H1 (cell line): ENCODE measurements at regions of chr14 and their contacts with region 1.

Region 1: DNA sequence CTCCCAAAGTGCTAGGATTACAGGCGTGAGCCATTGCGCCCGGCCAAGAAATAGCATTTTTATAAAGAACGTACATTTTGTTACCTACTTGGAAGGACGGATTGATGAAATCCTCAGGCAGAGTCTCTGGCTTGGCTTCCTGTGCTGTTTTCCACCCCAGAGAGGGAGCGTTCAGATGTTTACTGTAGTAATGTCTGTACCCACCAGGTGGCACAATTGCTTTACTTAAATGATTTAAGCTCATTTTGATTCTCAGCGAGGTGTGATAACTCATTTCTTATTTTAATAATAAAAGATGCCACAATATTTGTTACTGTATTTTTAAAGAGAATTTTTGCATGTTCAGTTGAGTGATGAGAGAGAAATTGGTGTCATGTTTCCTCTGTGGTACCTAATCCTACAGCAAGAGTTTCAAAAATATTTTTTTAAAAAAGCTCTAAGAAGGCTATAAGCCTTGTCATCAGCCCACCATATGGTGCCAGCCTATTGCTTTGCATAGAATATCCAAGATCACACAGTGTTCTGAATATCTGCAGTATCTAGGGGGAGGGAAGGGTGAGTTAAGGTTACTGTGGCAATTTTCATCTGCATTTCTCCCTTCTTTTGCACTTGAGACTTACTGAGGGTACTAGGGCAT is 82.6 kb upstream of the TRAF3 start:
- DNase-seq: peak; percentile 36 to 65
- H3K4me3 ChIP-seq: no peak overlapping the region
- H3K27ac ChIP-seq: no peak overlapping the region
- H3K4me1 ChIP-seq: peaks cover 0 to 8% (median under 1%) of the 10 kb centered on the region in 4 experiments; a peak in 2 of 7 replicates
- H3K27me3 ChIP-seq: no peaks in the 10 kb centered on the region
- CTCF ChIP-seq: peak in 2 of 3 experiments; percentile 56 to 71; a peak in 2 of 4 replicates
- EP300 ChIP-seq: no peak
- POLR2A ChIP-seq: no peak
- RAD21 ChIP-seq: peak; percentile 76 to 80

Region 2: GRCh38 chr14:102593062-102593824 is 101.4 kb before region 1 on chr14:
- CTCF ChIA-PET with region 1: interaction called, 11 read pairs
- POLR2A ChIA-PET with region 1: interaction called, 5 read pairs
- DNase-seq: peak in 1 of 2 experiments; percentile 73
- H3K4me3 ChIP-seq: peak overlapping the region; percentile 77 to 96 (median 80)
- H3K27ac ChIP-seq: no peak overlapping the region
- H3K4me1 ChIP-seq: peaks cover 3 to 21% (median 10%) of the 10 kb centered on the region in 4 experiments; a peak in 6 of 7 replicates
- H3K27me3 ChIP-seq: no peaks in the 10 kb centered on the region
- CTCF ChIP-seq: peak; percentile 1 to 21 (median 10); a peak in 3 of 4 replicates
- EP300 ChIP-seq: no peak
- POLR2A ChIP-seq: no peak
- RAD21 ChIP-seq: peak; percentile 9 to 29; a peak in 1 of 4 replicates

Region 3: GRCh38 chr14:102683399-102684297 is 11.0 kb before region 1 on chr14:
- CTCF ChIA-PET with region 1: interaction called, 14 read pairs
- POLR2A ChIA-PET with region 1: interaction called, 4 read pairs
- DNase-seq: no peak
- H3K4me3 ChIP-seq: no peak overlapping the region
- H3K27ac ChIP-seq: no peak overlapping the region
- H3K4me1 ChIP-seq: peaks cover 0 to 11% (median 7%) of the 10 kb centered on the region in 4 experiments; a peak in 6 of 7 replicates
- H3K27me3 ChIP-seq: no peaks in the 10 kb centered on the region
- CTCF ChIP-seq: no peak
- EP300 ChIP-seq: no peak
- POLR2A ChIP-seq: no peak
- RAD21 ChIP-seq: no peak

Region 4: GRCh38 chr14:102731871-102732800 is 37.5 kb after region 1 on chr14:
- CTCF ChIA-PET with region 1: interaction called, 19 read pairs
- POLR2A ChIA-PET with region 1: no interaction called
- DNase-seq: peak in 1 of 2 experiments; percentile 50
- H3K4me3 ChIP-seq: no peak overlapping the region
- H3K27ac ChIP-seq: no peak overlapping the region
- H3K4me1 ChIP-seq: peaks cover 0 to 4% (median 0%) of the 10 kb centered on the region in 4 experiments; a peak in 2 of 7 replicates
- H3K27me3 ChIP-seq: no peaks in the 10 kb centered on the region
- CTCF ChIP-seq: no peak
- EP300 ChIP-seq: no peak
- POLR2A ChIP-seq: no peak
- RAD21 ChIP-seq: no peak

Region 5: GRCh38 chr14:102759456-102760187 is 65.0 kb after region 1 on chr14:
- CTCF ChIA-PET with region 1: interaction called, 25 read pairs
- POLR2A ChIA-PET with region 1: no interaction called
- DNase-seq: no peak
- H3K4me3 ChIP-seq: no peak overlapping the region
- H3K27ac ChIP-seq: no peak overlapping the region
- H3K4me1 ChIP-seq: peaks cover 4 to 19% (median 14%) of the 10 kb centered on the region in 4 experiments
- H3K27me3 ChIP-seq: no peaks in the 10 kb centered on the region; a peak in 1 of 7 replicates
- CTCF ChIP-seq: peak in 2 of 3 experiments; percentile 4 to 32; a peak in 2 of 4 replicates
- EP300 ChIP-seq: no peak
- POLR2A ChIP-seq: no peak
- RAD21 ChIP-seq: peak; percentile 31 to 51

Region 6: GRCh38 chr14:102785584-102785942 is 90.9 kb after region 1 on chr14:
- CTCF ChIA-PET with region 1: interaction called, 15 read pairs
- POLR2A ChIA-PET with region 1: no interaction called
- DNase-seq: no peak
- H3K4me3 ChIP-seq: no peak overlapping the region
- H3K27ac ChIP-seq: no peak overlapping the region
- H3K4me1 ChIP-seq: 0 out of 7 replicates have a peak, but pooled peaks cover 0 to 3% (median 0%) of the 10 kb centered on the region in 4 experiments
- H3K27me3 ChIP-seq: no peaks in the 10 kb centered on the region
- CTCF ChIP-seq: peak; percentile 29 to 50 (median 36)
- EP300 ChIP-seq: no peak
- POLR2A ChIP-seq: no peak
- RAD21 ChIP-seq: peak; percentile 65 to 72

Region 7: GRCh38 chr14:102922490-102923200 is 228.0 kb after region 1 on chr14 and contains the start of gene AMN:
- CTCF ChIA-PET with region 1: interaction called, 17 read pairs
- POLR2A ChIA-PET with region 1: no interaction called
- DNase-seq: peak in 1 of 2 experiments; percentile 72
- H3K4me3 ChIP-seq: peak within 1 kb of the TSS; percentile 22 to 56 (median 34); a peak in 7 of 8 replicates
- H3K27ac ChIP-seq: no peak within 1 kb of the TSS
- H3K4me1 ChIP-seq: peaks cover 5 to 22% (median 12%) of the 10 kb centered on the region in 4 experiments
- H3K27me3 ChIP-seq: peaks cover 23 to 59% (median 48%) of the 10 kb centered on the region in 4 experiments; a peak in 6 of 7 replicates
- CTCF ChIP-seq: no peak
- EP300 ChIP-seq: no peak
- POLR2A ChIP-seq: no peak
- RAD21 ChIP-seq: no peak
- total RNA-seq, gene AMN: 0.99 and 1.5 TPM in 2 replicates